Head of caudate nucleus (tissue), 42 donors: ENCODE measurements at regions of chr1 and their contacts with region 1.

Region 1: DNA sequence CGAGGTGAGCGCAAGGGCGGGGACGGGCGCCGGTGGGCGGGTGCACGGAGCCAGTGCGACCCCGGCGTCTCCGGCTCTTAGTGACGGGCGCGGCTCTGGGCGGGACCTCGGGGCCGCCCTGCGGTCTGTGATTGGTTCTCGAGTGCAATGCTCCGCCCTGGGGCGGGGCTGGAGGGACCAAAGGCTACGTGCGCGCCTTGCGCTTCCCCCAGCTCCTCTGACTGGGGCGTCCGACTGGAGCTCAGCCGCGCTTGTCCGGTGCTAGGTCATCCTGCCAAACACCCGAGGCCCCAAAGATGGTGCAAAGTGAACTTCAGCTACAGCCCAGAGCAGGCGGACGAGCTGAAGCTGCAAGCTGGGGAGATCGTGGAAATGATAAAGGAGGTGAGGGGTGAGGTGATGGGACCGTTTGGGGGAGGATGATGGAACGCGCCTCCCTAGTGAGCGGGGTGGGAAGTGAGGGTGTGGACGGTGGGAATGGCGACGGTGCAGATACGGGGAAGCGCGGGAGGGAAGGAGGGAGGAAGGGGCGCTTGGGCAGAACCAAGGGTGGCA is 811 bp downstream of the SH3D21 start:
- DNase-seq: peak; percentile 73 to 98 (median 92)

Region 2: DNA sequence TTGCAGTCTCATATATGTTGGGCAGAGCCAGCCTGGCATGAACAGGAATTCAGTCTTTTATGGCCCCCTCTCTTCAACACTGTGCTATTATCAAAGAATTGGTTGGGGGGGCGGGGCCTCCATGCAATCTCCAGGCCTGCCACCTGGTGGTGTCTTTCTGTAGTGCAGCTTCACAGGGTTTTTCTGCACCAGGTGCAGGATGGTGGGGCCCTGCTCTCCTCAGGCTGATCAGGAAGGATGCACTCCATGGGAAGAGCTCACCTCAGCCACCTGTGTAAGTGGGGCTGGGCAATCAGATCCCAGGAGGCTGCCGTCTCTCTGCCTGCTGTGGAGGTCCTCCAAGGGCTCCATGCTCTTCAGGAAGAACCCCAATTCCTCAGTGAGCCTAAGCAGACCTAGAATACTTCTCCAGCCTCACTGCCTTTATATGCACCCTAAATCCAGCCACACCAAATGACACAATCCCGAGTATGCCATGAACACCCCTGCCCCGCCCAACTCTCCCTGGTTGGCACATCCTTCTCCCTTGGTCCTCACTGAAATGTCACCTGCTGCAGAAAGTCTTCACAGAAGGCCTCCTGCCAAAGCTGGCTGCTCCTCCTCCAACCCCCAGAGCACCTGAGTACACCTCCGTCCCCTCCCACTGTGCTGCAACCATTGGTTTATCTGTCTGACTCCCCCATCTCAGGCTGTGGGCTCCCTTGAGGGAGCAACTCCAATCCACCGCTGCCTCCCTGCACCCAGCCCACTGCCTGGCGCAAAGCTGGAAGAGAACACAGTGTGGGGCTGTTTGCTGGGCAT is 62.3 kb after region 1 on chr1:
- intact Hi-C with region 1: loop called (anchors 5 kb)
- DNase-seq: peak; percentile 60 to 92 (median 82)